Tibial artery (tissue), 4 donors: ENCODE measurements at regions of chr9 and their contacts with region 1.

Region 1: GRCh38 chr9:21919377-21920362 is 74.5 kb downstream of the CDKN2A start:
- DNase-seq: no peak
- H3K4me3 ChIP-seq: no peak overlapping the region
- H3K27ac ChIP-seq: no peak overlapping the region
- H3K4me1 ChIP-seq: no peaks in the 10 kb centered on the region
- H3K27me3 ChIP-seq: no peaks in the 10 kb centered on the region
- CTCF ChIP-seq: no peak

Region 2: DNA sequence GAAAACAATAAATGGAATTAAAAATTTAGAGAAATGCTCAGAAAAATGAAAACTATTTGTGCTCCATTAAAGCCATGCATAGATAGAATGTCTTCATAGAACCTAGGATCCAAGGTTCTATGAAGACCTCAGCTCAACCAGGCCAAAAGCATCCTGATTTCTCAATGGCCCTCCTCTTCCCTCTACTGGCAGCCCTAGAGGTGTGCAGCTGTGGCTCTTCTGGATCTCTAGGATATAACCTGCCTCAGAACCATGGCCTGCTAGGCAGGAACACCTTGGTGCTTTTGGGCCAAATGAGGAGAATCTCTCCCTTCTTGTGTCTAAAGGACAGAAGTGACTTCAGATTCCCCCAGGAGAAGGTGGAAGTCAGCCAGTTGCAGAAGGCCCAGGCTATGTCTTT is 464.4 kb before region 1 on chr9:
- intact Hi-C with region 1: no loop called
- DNase-seq: no peak
- H3K4me3 ChIP-seq: no peak overlapping the region
- H3K27ac ChIP-seq: no peak overlapping the region
- H3K4me1 ChIP-seq: no peaks in the 10 kb centered on the region
- H3K27me3 ChIP-seq: no peaks in the 10 kb centered on the region
- CTCF ChIP-seq: peak; percentile 41 to 52

Region 3: GRCh38 chr9:21605489-21605931 is 314.2 kb before region 1 on chr9:
- intact Hi-C with region 1: no loop called
- DNase-seq: no peak
- H3K4me3 ChIP-seq: no peak overlapping the region
- H3K27ac ChIP-seq: no peak overlapping the region
- H3K4me1 ChIP-seq: no peaks in the 10 kb centered on the region
- H3K27me3 ChIP-seq: peaks cover 0 to 6% of the 10 kb centered on the region in 2 donors
- CTCF ChIP-seq: no peak

Region 4: DNA sequence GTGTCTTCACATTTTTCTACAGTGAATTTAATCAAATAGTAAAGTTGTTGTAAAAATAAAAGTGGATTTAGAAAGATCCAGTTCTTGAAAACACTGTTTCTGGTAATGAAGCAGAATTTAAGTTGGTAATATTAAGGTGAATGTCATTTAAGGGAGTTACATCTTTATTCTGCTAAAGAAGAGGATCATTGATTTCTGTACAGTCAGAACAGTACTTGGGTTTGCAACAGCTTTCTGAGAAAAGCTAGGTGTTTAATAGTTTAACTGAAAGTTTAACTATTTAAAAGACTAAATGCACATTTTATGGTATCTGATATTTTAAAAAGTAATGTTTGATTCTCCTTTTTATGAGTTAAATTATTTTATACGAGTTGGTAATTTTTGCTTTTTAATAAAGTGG is 56.8 kb before region 1 on chr9:
- intact Hi-C with region 1: loop called (anchors 10 kb)
- DNase-seq: no peak
- H3K4me3 ChIP-seq: no peak overlapping the region
- H3K27ac ChIP-seq: no peak overlapping the region
- H3K4me1 ChIP-seq: no peaks in the 10 kb centered on the region
- H3K27me3 ChIP-seq: no peaks in the 10 kb centered on the region
- CTCF ChIP-seq: no peak

Region 5: GRCh38 chr9:21964925-21965385 is 45.3 kb after region 1 on chr9:
- intact Hi-C with region 1: no loop called
- DNase-seq: no peak
- H3K4me3 ChIP-seq: peak overlapping the region; percentile 24 to 30
- H3K27ac ChIP-seq: no peak overlapping the region
- H3K4me1 ChIP-seq: peaks cover 0 to 22% (median 9%) of the 10 kb centered on the region in 4 donors
- H3K27me3 ChIP-seq: peaks cover 0 to 69% of the 10 kb centered on the region in 2 donors
- CTCF ChIP-seq: no peak